Naive thymus-derived CD4-positive, alpha-beta T cell (primary cell): ENCODE measurements at regions of chr19 and their contacts with region 1.

Region 1: DNA sequence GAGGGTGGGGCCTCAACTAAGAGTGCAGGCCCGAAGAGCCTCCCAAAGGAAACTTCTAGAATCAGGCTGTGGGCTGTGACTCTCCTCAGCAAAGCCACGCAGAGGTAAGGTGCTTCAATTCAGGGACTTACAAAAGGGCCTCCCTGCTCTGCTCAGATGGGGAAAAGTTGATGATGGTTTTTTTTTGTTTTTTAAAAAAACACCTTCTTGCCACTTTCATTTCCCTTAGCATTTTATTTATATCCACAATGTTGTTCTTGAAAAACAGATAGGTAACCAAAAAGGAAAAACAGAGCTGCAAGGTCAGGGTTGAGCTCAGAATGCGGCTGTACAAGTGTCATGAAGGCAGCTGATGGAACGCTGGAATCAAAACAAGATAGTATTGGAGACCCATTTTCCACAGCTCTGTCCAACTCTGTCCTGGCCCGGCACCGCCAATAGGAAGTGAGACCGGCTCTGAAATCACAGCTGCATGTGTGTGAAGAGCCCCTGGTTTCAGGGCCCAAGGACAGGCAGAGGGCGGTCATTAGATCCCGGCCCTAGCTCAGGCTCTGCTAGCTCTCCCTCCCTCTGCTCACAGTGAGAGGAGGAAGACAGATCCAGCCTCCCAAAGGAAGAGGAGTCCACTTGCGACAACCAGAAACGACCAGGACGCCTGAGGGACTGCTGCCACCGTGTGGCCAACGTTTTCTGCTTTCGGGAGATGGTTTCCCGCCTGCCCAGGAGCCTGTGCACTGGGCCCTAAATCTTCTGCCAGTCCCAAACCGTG is 58.3 kb downstream of the KLF2 start:
- DNase-seq: peak; percentile 63 to 81 (median 75)
- ATAC-seq: peak; percentile 82
- H3K4me3 ChIP-seq: peak overlapping the region; percentile 44
- H3K4me3 Mint-ChIP-seq: peak overlapping the region; percentile 61 to 84 (median 70)
- H3K27ac ChIP-seq: peak overlapping the region; percentile 84
- H3K27ac Mint-ChIP-seq: peak overlapping the region in 7 of 9 donors; percentile 87 to 98 (median 97)
- H3K4me1 ChIP-seq: peaks cover 37 to 53% of the 10 kb centered on the region in 2 donors
- H3K4me1 Mint-ChIP-seq: peaks cover 36 to 81% (median 63%) of the 10 kb centered on the region in 7 donors
- H3K27me3 ChIP-seq: no peaks in the 10 kb centered on the region
- H3K27me3 Mint-ChIP-seq: no peaks in the 10 kb centered on the region

Region 2: DNA sequence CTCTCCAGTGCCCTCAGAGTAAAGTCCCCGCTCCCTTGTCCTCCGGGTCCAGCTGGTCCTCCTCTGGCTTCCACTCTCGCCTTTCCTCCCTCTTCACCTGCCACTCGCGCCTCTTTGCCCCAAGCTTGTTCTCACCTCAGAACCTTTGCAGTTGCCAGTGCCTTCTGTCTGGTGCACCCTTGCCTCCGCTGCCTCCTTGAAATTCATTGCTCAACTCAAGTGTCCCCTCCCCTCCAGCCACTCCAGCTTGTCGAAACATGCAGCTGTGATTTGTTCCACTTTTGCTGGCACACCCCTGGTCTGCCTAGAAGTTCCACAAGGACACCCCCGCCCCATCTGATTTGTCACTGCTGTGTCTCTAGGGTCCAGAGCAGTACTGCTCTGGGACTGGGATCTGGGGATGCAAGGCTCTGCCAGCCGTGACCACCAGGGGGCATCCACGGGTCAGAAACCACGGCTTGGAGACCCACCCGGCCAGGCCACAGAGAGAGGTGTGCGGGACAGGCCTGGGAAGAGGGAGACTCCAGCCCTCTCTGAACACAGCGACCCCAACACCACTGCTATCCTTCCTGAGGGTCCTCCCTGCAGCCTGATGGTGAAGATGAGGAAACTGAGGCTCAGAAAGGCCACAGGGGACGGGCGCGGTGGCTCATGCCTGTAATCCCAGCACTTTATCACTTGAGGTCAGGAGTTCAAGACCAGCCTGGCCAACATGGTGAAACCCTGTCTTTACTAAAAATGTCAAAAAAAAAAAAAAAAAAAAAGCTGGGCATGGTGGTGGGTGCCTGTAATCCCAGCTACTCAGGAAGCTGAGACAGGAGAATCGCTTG is 135.4 kb before region 1 on chr19:
- CTCF ChIA-PET with region 1: interaction called, 85 read pairs
- POLR2A ChIA-PET with region 1: interaction called, 87 read pairs
- intact Hi-C with region 1: loop called (anchors 1 kb)
- DNase-seq: peak; percentile 60 to 89 (median 77)
- ATAC-seq: peak; percentile 95
- H3K4me3 ChIP-seq: no peak overlapping the region
- H3K4me3 Mint-ChIP-seq: peak overlapping the region; percentile 22 to 71 (median 56)
- H3K27ac ChIP-seq: no peak overlapping the region
- H3K27ac Mint-ChIP-seq: peak overlapping the region; percentile 48 to 94 (median 84)
- H3K4me1 ChIP-seq: peaks cover 15 to 24% of the 10 kb centered on the region in 2 donors
- H3K4me1 Mint-ChIP-seq: peaks cover 17 to 38% (median 36%) of the 10 kb centered on the region in 7 donors
- H3K27me3 ChIP-seq: no peaks in the 10 kb centered on the region
- H3K27me3 Mint-ChIP-seq: peaks cover 0 to 7% (median 0%) of the 10 kb centered on the region in 5 donors

Region 3: DNA sequence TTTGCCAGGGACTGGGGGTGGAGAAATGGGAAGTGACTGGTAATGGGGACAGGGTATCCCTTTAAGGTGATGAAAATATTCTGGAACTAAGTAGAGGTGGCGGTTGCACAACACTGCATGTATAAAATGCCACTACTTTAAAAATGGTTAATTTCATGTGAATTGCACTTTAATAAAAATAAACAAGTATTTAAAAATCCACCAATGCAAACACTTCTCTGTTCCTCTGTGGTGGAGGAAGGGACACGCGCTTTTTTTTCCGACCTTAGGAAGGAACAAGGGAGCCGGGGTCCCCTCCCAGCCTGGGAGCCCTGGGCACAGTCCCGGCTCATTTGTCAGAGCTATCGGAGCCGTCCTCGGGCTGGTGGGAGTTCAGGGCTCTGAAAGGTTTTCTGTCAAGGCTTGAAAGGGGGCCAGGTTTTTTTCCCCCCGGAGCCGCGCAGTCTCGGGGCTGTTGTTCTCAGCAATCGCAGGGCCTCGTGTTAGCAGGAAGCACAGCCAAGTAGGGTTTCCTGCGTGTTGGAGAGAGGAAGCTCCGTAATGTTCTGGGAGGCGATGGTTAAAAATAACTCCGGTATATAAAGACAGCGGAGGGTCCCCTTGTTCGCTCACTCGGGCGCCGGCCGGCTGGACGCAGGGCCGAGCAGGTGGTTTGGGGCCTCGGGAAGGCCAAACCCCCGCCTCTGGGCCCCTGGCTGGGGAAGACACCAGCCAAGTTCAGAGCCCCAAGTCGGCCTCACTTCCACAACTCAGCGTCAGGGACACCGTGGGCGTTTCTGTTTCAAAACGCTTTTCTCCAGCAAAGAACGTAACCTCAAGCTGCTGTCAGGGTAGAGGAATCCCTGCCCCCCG is 99.5 kb before region 1 on chr19:
- CTCF ChIA-PET with region 1: interaction called, 4 read pairs
- POLR2A ChIA-PET with region 1: interaction called, 10 read pairs
- intact Hi-C with region 1: no loop called
- DNase-seq: peak in 8 of 9 donors; percentile 31 to 77 (median 68)
- ATAC-seq: peak; percentile 75
- H3K4me3 ChIP-seq: peak overlapping the region; percentile 53
- H3K4me3 Mint-ChIP-seq: peak overlapping the region; percentile 61 to 86 (median 84)
- H3K27ac ChIP-seq: peak overlapping the region; percentile 75
- H3K27ac Mint-ChIP-seq: peak overlapping the region; percentile 81 to 98 (median 94)
- H3K4me1 ChIP-seq: peaks cover 9 to 34% of the 10 kb centered on the region in 2 donors
- H3K4me1 Mint-ChIP-seq: peaks cover 31 to 60% (median 51%) of the 10 kb centered on the region in 7 donors
- H3K27me3 ChIP-seq: no peaks in the 10 kb centered on the region
- H3K27me3 Mint-ChIP-seq: peaks cover 0 to 48% (median 0%) of the 10 kb centered on the region in 5 donors

Region 4: GRCh38 chr19:16338470-16339360 is 44.2 kb before region 1 on chr19:
- CTCF ChIA-PET with region 1: interaction called, 12 read pairs
- POLR2A ChIA-PET with region 1: interaction called, 4,370 read pairs
- intact Hi-C with region 1: loop called in 1 of 2 experiments (anchors 2 kb)
- DNase-seq: peak in 5 of 9 donors; percentile 30 to 68 (median 50)
- ATAC-seq: peak; percentile 54
- H3K4me3 ChIP-seq: peak overlapping the region; percentile 44
- H3K4me3 Mint-ChIP-seq: peak overlapping the region; percentile 79 to 95 (median 88)
- H3K27ac ChIP-seq: peak overlapping the region; percentile 60
- H3K27ac Mint-ChIP-seq: peak overlapping the region; percentile 86 to 98 (median 91)
- H3K4me1 ChIP-seq: peaks cover 54 to 57% of the 10 kb centered on the region in 2 donors
- H3K4me1 Mint-ChIP-seq: peaks cover 28 to 78% (median 64%) of the 10 kb centered on the region in 7 donors
- H3K27me3 ChIP-seq: no peaks in the 10 kb centered on the region
- H3K27me3 Mint-ChIP-seq: peaks cover 0 to 22% (median 0%) of the 10 kb centered on the region in 5 donors

Region 5: GRCh38 chr19:16400911-16401591 is 18.1 kb after region 1 on chr19:
- CTCF ChIA-PET with region 1: interaction called, 3 read pairs
- POLR2A ChIA-PET with region 1: interaction called, 10 read pairs
- intact Hi-C with region 1: no loop called
- DNase-seq: no peak
- ATAC-seq: no peak
- H3K4me3 ChIP-seq: no peak overlapping the region
- H3K4me3 Mint-ChIP-seq: no peak overlapping the region
- H3K27ac ChIP-seq: no peak overlapping the region
- H3K27ac Mint-ChIP-seq: peak overlapping the region in 8 of 9 donors; percentile 45 to 88 (median 78)
- H3K4me1 ChIP-seq: peaks cover 0 to 17% of the 10 kb centered on the region in 2 donors
- H3K4me1 Mint-ChIP-seq: peaks cover 0 to 33% (median 19%) of the 10 kb centered on the region in 7 donors
- H3K27me3 ChIP-seq: no peaks in the 10 kb centered on the region
- H3K27me3 Mint-ChIP-seq: no peaks in the 10 kb centered on the region